Activated T-helper 2 cell treated with anti-CD3 and anti-CD28 coated beads, Interferon-gamma antibody, Interleukin-2, Interleukin-4, amounts not matched to agents 10 μg/mL and 5 μg/mL and 100 μg/mL, durations not matched to agents 14 hours and 24 hours and 36 hours (primary cell): ENCODE measurements at regions of chr3 and their contacts with region 1.

Region 1: GRCh38 chr3:60046210-60046609 is 996.4 kb upstream of the CFAP20DC start:
- DNase-seq: no peak
- H3K4me3 Mint-ChIP-seq: no peak overlapping the region
- H3K27ac Mint-ChIP-seq: peak overlapping the region; percentile 61
- H3K4me1 Mint-ChIP-seq: peaks cover 62% of the 10 kb centered on the region
- H3K27me3 Mint-ChIP-seq: no peaks in the 10 kb centered on the region

Region 2: GRCh38 chr3:59866076-59866475 is 180.1 kb before region 1 on chr3:
- intact Hi-C with region 1: loop called (anchors 5 kb)
- DNase-seq: no peak
- H3K4me3 Mint-ChIP-seq: no peak overlapping the region
- H3K27ac Mint-ChIP-seq: peak overlapping the region; percentile 2
- H3K4me1 Mint-ChIP-seq: peaks cover 31% of the 10 kb centered on the region
- H3K27me3 Mint-ChIP-seq: no peaks in the 10 kb centered on the region

Region 3: DNA sequence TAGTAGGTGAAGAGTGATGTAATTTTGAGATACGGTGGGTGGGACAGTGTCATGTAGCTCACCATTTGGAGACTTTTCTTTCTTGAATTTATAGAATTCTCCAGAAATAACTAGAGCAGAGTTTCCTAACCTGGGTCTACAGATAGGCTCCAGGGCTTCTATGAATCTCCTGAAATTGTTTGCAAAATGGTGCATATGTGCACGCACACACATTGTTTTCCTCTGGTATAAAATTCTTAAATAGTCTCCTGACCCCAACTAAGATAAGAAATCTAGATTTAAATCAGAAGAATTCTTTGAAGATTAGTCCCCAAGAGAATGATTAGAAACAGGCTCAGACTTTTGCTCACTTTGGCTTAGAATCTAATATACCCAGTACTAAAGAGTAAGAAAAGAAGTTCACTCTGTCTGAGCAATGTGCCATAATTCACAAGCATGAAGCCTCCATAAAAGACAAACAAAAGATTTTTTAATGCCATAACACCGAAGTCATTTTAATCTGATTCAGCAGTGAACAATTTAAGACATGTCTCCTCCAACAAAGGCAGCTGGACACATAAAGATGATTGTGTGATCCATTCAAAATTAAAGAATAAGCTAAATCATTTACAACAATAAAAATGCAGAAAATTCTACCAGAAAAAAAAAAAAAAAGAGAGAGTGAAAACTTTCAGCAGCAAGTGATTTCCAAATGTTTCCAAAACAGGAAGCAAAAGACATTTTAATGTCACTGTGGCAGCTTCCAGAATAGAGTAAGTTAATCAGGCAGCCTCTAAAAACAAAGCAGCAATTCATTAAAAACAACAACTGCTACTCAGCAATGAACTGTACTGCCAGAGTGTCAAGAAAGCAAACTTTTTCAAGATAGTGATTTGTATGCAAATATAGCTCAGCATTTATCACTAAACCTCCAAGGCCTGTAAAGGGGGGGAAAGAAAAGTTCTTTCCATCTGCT is 20.8 kb before region 1 on chr3:
- intact Hi-C with region 1: no loop called
- DNase-seq: no peak
- H3K4me3 Mint-ChIP-seq: no peak overlapping the region
- H3K27ac Mint-ChIP-seq: peak overlapping the region; percentile 68
- H3K4me1 Mint-ChIP-seq: peaks cover 65% of the 10 kb centered on the region
- H3K27me3 Mint-ChIP-seq: no peaks in the 10 kb centered on the region

Region 4: DNA sequence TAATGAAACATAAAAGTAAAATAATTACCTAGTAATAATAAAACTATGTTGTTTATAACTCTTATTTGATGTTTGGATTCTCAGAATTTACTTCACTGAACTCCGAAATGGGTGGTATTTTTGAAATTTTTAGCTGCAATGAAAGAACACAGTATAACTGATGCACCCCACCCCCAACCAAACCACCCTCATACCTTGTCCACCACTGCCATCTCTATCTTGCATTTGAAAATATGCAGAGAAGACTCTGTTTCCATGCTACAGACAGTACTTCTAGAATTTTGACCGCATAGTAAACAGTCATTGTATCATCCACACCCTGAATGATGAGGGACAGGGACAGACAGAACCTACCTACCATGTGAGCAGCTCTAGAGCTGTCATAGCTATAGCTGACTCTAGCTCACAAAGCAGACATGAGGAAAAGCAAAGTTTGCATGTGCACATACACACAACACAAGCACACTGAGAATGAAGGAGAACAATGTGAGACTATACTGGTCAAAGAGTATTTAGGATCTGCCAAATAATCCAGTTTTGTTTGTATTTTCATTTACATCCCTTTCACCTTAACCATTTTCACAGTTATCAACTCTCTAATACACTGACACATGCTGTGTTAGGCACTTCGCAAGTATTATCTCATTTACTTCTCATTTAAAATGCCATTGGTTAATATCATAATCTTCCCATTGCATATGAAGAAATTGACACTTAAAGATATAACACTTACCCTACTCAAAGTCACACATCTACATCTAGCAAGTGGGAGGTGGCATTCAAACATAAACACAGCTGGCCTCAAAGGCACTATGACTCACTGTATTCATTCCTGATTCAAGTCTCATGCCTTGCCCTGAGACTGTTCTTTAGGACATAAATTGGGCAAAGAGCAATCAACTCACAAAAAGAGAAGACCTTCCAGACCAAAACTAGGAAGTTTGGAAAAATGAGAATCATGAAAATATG is 18.3 kb after region 1 on chr3:
- intact Hi-C with region 1: loop called (anchors 2 kb)
- DNase-seq: no peak
- H3K4me3 Mint-ChIP-seq: peak overlapping the region; percentile 34
- H3K27ac Mint-ChIP-seq: peak overlapping the region; percentile 89
- H3K4me1 Mint-ChIP-seq: peaks cover 70% of the 10 kb centered on the region
- H3K27me3 Mint-ChIP-seq: no peaks in the 10 kb centered on the region